Activated naive CD4-positive, alpha-beta T cell treated with anti-CD3 and anti-CD28 coated beads, Interleukin-2, amount 10 ng/mL, durations not matched to agents 7 days and 5 days (primary cell): ENCODE measurements at regions of chr20 and their contacts with region 1.

Region 1: GRCh38 chr20:31849455-31849925 is 4.1 kb upstream of the FOXS1 start:
- DNase-seq: no peak
- H3K4me3 Mint-ChIP-seq: no peak overlapping the region
- H3K27ac Mint-ChIP-seq: no peak overlapping the region
- H3K4me1 Mint-ChIP-seq: no peaks in the 10 kb centered on the region
- H3K27me3 Mint-ChIP-seq: peaks cover 64% of the 10 kb centered on the region

Region 2: DNA sequence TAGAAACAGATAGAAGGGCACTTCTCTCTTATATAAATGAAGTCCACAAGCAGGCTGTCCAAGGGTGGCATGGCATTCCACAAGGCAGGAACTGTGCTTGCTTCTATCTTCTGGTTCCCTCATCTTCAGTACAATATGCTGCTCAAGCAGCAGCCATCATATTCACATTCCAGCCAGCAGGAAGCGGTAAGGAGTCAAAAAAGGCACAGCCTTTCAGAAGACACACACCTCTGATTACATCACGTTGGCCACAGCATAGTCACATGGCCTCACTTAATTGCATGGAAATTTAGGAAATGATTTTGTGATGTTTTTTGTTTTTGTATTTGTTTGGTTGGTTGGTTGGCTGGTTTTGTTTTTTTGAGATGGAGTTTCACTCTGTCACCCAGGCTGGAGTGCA is 355.4 kb before region 1 on chr20:
- CTCF ChIA-PET with region 1: no interaction called
- DNase-seq: no peak
- H3K4me3 Mint-ChIP-seq: no peak overlapping the region
- H3K27ac Mint-ChIP-seq: no peak overlapping the region
- H3K4me1 Mint-ChIP-seq: no peaks in the 10 kb centered on the region
- H3K27me3 Mint-ChIP-seq: peaks cover 14% of the 10 kb centered on the region

Region 3: GRCh38 chr20:31835977-31836852 is 13.3 kb before region 1 on chr20:
- CTCF ChIA-PET with region 1: interaction called, 40 read pairs
- DNase-seq: peak; percentile 49
- H3K4me3 Mint-ChIP-seq: no peak overlapping the region
- H3K27ac Mint-ChIP-seq: no peak overlapping the region
- H3K4me1 Mint-ChIP-seq: peaks cover 12% of the 10 kb centered on the region
- H3K27me3 Mint-ChIP-seq: peaks cover 5% of the 10 kb centered on the region

Region 4: GRCh38 chr20:31909253-31910070 is 60.0 kb after region 1 on chr20:
- CTCF ChIA-PET with region 1: no interaction called
- DNase-seq: no peak
- H3K4me3 Mint-ChIP-seq: no peak overlapping the region
- H3K27ac Mint-ChIP-seq: no peak overlapping the region
- H3K4me1 Mint-ChIP-seq: no peaks in the 10 kb centered on the region
- H3K27me3 Mint-ChIP-seq: peaks cover 11% of the 10 kb centered on the region

Region 5: DNA sequence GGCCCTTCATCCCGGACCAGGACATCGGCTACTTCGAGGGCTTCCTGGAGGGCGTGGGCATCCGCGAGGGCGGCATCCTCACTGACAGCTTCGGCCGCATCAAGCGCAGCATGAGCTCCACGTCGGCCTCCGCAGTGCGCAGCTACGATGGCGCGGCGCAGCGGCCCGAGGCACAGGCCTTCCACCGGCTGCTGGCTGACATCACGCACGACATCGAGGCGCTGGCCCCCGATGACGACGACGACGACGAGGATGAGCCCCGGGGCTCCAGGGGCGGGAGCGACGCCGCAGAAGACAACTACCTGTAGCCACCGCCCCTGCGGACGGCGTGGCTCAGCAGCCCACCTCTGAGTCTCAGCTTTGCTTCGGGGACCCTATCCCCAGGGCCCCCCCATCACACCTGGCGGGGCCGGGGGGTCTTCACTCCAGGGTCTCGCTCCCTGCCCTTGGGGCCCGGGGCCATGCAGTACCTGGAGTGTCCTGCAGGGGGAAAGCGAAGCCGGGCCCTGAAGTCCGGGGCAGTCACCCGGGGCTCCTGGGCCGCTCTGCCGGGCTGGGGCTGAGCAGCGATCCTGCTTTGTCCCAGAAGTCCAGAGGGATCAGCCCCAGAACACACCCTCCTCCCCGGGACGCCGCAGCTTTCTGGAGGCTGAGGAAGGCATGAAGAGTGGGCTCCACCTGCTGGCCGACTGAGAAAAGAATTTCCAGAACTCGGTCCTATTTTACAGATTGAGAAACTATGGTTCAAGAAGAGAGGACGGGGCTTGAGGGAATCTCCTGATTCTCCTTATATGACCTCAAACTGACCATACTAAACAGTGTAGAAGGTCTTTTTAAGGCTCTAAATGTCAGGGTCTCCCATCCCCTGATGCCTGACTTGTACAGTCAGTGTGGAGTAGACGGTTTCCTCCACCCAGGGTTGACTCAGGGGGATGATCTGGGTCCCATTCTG is 181.8 kb after region 1 on chr20:
- CTCF ChIA-PET with region 1: interaction called, 86 read pairs
- DNase-seq: peak; percentile 70
- H3K4me3 Mint-ChIP-seq: no peak overlapping the region
- H3K27ac Mint-ChIP-seq: no peak overlapping the region
- H3K4me1 Mint-ChIP-seq: peaks cover 3% of the 10 kb centered on the region
- H3K27me3 Mint-ChIP-seq: peaks cover 55% of the 10 kb centered on the region

Region 6: GRCh38 chr20:32091888-32092346 is 242.4 kb after region 1 on chr20:
- CTCF ChIA-PET with region 1: interaction called, 14 read pairs
- DNase-seq: peak; percentile 87
- H3K4me3 Mint-ChIP-seq: no peak overlapping the region
- H3K27ac Mint-ChIP-seq: no peak overlapping the region
- H3K4me1 Mint-ChIP-seq: no peaks in the 10 kb centered on the region
- H3K27me3 Mint-ChIP-seq: peaks cover 37% of the 10 kb centered on the region